ENCODE measurements at regions of chrX and their contacts with region 1.

Region 1: GRCh38 chrX:118637997-118638396 is 89.4 kb upstream of the IL13RA1 start:
- DNase-seq: no peak
- ATAC-seq: no peak
- H3K4me3 Mint-ChIP-seq: no peak overlapping the region
- H3K27ac Mint-ChIP-seq: no peak overlapping the region
- H3K4me1 Mint-ChIP-seq: no peaks in the 10 kb centered on the region
- H3K27me3 Mint-ChIP-seq: no peaks in the 10 kb centered on the region
- CTCF ChIP-seq: no peak

Region 2: GRCh38 chrX:118627084-118627758 is 10.8 kb before region 1 on chrX:
- CTCF ChIA-PET with region 1: interaction called, 10 read pairs
- POLR2A ChIA-PET with region 1: no interaction called
- intact Hi-C with region 1: no loop called
- DNase-seq: no peak
- ATAC-seq: peak; percentile 51
- H3K4me3 Mint-ChIP-seq: no peak overlapping the region
- H3K27ac Mint-ChIP-seq: no peak overlapping the region
- H3K4me1 Mint-ChIP-seq: no peaks in the 10 kb centered on the region
- H3K27me3 Mint-ChIP-seq: no peaks in the 10 kb centered on the region
- CTCF ChIP-seq: peak; percentile 14